ENCODE measurements at regions of chr2 and their contacts with region 1.

Region 1: DNA sequence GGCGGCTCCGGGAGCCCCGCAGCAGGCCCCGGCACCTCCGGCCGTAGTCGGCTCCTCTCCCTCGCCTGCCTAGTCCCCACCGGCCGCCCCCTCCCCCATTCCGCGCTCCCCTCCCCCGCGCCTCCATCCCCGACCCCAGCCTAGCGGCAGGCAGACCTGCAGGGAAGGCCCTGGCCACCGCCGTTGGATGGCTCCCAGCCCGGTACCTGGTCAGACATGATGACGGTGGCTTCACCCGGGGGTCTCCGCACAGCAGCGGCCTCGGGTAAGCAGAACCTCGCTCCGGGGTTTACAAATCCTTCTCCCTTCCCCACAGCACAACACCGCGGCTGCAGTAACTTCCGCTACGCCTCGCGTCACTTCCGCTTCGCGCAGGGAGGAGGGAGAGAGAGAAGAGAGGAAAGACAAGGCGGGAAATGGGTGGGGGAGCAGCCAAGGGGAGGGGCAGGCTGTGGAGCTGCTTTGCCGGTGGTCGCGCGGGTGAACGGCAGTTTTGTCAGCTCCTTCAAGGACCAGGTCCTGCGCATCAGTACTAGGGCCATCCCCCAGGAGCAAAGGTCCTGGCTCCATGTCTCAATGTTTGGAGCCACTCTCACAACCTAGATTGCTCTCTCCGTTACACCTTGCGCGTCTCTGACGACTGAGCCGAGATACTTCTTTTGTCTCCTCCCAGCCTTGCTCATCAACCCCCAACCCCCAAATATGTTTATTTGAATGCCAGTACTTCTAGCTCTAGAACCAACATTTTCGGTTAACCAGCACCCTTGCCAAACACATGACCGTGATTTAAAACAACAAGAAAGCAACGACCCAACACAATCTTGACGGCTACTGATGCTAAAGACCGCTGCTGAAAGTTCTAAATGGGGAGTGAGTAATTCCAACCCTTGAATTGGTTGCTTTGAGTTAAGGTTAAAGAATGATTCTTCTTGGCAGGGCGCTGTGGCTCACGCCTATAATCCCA is at the start of gene SUMO1:
- DNase-seq: peak; percentile 98
- H3K4me3 Mint-ChIP-seq: peak within 1 kb of the TSS; percentile 94
- H3K27ac Mint-ChIP-seq: peak within 1 kb of the TSS; percentile 92
- H3K4me1 Mint-ChIP-seq: peaks cover 16% of the 10 kb centered on the region
- H3K27me3 Mint-ChIP-seq: no peaks in the 10 kb centered on the region
- total RNA-seq, gene SUMO1: 121 and 127 TPM in 2 replicates

Region 2: DNA sequence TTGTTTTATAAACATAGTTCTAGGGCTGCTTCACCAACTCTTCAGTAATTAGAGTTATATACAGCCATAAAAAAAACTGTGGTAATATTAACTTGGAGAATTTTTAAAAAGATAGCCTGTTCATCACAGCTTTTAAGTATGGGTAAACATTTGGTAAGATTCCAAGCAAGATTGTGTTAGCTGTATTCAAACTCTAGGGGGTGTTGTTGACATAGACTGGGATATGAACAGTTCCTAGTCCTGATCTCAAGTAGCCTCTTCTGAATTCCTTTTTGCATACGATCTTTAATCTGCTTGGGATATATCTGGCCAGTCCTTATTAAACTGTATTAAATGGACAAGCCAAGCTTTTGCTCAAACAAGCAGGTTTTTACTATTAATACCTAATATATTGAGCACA is 40.4 kb after region 1 on chr2:
- intact Hi-C with region 1: loop called (anchors 5 kb)
- DNase-seq: no peak
- H3K4me3 Mint-ChIP-seq: peak overlapping the region; percentile 21
- H3K27ac Mint-ChIP-seq: peak overlapping the region; percentile 62
- H3K4me1 Mint-ChIP-seq: peaks cover 35% of the 10 kb centered on the region
- H3K27me3 Mint-ChIP-seq: no peaks in the 10 kb centered on the region

Region 3: GRCh38 chr2:202634556-202635427 is 396.3 kb after region 1 on chr2 and contains the start of gene FAM117B:
- intact Hi-C with region 1: no loop called
- DNase-seq: peak; percentile 99
- H3K4me3 Mint-ChIP-seq: peak within 1 kb of the TSS; percentile 98
- H3K27ac Mint-ChIP-seq: peak within 1 kb of the TSS; percentile 97
- H3K4me1 Mint-ChIP-seq: peaks cover 35% of the 10 kb centered on the region
- H3K27me3 Mint-ChIP-seq: no peaks in the 10 kb centered on the region
- total RNA-seq, gene FAM117B: 14.5 TPM in 2 replicates